GM12878 (cell line): ENCODE measurements at regions of chr6 and their contacts with region 1.

Region 1: DNA sequence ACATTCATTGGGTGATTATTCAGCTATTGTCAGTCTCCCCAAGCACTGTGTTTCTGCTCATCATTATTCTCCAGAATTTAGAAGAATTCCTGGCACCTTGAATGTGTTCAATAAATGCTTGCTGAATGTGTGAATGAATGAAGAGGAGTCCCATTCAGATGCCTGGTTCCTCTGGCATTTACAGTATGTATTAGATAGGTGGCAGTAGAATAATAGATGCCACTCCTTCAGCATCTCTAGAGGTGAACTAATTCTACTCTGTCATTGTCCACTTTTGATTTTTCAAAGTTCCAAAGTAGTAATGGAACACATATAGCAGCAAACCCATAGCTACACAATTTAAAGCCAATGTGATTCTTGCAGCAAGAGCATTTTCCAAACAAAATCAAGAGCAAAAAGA is 118.9 kb upstream of the CEP162 start:
- DNase-seq: no peak
- ATAC-seq: peak; percentile 33; the same call in 1 of the 3 replicates
- H3K4me3 ChIP-seq: no peak overlapping the region
- H3K27ac ChIP-seq: no peak overlapping the region
- H3K4me1 ChIP-seq: no peaks in the 10 kb centered on the region
- H3K27me3 ChIP-seq: no peaks in the 10 kb centered on the region
- CTCF ChIP-seq: no peak; a peak in 1 of 6 replicates
- EP300 ChIP-seq: no peak
- POLR2A ChIP-seq: no peak
- RAD21 ChIP-seq: no peak

Region 2: DNA sequence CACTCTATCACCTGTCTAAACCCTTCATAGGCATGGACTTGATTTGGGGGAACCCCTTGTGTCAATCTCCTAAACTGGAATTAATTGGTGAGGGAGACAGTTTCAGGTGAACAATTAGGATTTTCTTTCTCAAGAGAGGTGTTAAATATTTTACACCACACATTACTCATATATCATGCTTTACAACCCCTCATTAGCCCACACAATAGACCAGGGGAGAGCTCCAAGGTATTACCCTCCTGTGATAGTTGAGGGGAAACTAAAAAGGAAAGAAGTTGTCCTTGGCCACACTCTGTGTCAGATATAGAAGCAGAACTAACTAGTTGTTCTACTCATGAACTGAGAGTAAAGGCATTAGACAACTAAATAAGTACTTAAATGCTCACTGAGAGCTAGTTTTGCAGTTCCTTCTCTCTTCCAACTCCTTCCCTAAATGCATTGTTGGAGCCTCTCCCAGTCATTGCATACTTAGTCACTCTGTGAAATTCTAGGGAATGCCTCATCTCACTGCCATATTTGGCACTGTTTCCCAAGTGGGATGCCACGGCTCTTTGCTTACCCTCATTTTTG is 64.8 kb after region 1 on chr6:
- CTCF ChIA-PET with region 1: interaction called, 6 read pairs
- POLR2A ChIA-PET with region 1: no interaction called
- RAD21 ChIA-PET with region 1: interaction called, 5 read pairs
- SMC1A ChIA-PET with region 1: interaction called, 10 read pairs
- in situ Hi-C with region 1: no loop called
- intact Hi-C with region 1: no loop called
- DNase-seq: no peak
- ATAC-seq: peak; percentile 96
- H3K4me3 ChIP-seq: no peak overlapping the region
- H3K27ac ChIP-seq: no peak overlapping the region
- H3K4me1 ChIP-seq: no peaks in the 10 kb centered on the region
- H3K27me3 ChIP-seq: no peaks in the 10 kb centered on the region
- CTCF ChIP-seq: no peak
- EP300 ChIP-seq: peak; percentile 82 to 88; a peak in 2 of 4 replicates
- POLR2A ChIP-seq: no peak
- RAD21 ChIP-seq: no peak